ENCODE measurements at regions of chr2 and their contacts with region 1.

Region 1: DNA sequence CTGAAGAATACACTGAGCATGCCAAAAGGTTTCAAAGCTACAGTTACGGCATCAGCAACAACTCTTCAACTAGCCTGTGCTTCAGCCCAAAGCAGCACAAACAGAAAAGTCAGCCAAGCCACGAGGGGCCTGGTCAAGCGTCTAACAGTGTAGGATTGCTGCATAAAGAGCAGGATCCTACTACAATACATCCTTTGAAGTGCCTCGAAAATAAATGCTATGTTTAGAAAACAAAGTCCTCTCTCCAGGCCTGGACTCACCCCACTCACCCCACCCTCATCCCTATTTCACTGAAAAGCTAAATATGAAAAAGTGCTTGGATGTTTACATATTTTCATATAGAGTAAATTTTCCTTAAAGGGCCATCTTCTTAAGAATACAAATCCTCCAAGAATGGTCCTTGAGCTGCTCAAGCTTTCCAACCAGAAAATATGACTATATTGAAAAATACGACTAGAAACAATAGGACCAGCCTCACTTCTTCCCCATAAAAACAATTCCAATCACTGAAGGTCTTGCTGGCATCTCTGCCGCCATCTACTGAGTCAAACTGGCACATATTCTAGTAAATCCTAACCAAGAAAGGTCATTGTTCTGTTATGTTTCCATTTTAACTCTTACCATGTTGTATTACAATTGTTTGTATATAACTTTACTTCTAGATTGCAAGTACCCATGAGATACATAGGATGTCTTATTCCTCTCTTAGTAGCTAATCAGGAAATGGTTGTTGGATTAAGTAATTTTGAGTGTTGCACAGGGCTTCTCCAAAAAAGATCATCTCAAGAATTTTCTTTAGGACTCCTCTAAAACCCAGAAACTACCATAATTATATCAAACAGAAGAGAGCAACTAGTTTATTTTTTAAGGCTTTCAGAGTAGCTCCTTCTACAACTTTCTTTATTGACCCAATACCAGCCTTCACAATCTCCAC is 63.6 kb downstream of the CLHC1 start:
- DNase-seq: no peak
- ATAC-seq: peak; percentile 45
- H3K4me3 Mint-ChIP-seq: no peak overlapping the region
- H3K27ac Mint-ChIP-seq: no peak overlapping the region
- H3K4me1 Mint-ChIP-seq: no peaks in the 10 kb centered on the region
- H3K27me3 Mint-ChIP-seq: no peaks in the 10 kb centered on the region
- CTCF ChIP-seq: no peak

Region 2: GRCh38 chr2:54838585-54839035 is 329.9 kb before region 1 on chr2:
- CTCF ChIA-PET with region 1: interaction called, 7 read pairs
- POLR2A ChIA-PET with region 1: no interaction called
- intact Hi-C with region 1: loop called (anchors 1 kb)
- DNase-seq: peak; percentile 27
- ATAC-seq: peak; percentile 91
- H3K4me3 Mint-ChIP-seq: no peak overlapping the region
- H3K27ac Mint-ChIP-seq: no peak overlapping the region
- H3K4me1 Mint-ChIP-seq: peaks cover 4% of the 10 kb centered on the region
- H3K27me3 Mint-ChIP-seq: no peaks in the 10 kb centered on the region
- CTCF ChIP-seq: peak; percentile 58

Region 3: DNA sequence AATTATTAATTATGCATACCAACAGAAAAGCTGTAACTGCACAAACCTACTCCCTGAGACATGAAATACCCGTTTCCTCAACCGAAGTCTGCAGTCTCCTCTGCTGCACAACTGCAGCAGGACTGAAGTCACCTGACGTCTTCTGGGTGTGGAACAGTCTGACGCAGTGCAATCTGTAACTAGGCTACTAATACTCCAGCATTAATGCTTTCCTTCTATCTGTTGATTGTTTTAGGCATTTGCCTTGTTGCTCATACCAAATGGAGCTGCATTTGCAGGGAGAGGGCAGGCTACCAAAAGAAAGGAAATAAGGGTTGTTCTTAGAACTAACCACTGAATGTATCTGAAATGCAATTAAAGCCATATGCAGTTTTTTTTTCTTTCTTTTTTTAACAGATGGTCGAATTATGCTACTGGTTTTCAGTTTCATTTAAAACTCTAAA is 158.3 kb before region 1 on chr2:
- CTCF ChIA-PET with region 1: interaction called, 96 read pairs
- POLR2A ChIA-PET with region 1: no interaction called
- intact Hi-C with region 1: loop called (anchors 1 kb)
- DNase-seq: no peak
- ATAC-seq: peak; percentile 96
- H3K4me3 Mint-ChIP-seq: peak overlapping the region; percentile 84
- H3K27ac Mint-ChIP-seq: peak overlapping the region; percentile 67
- H3K4me1 Mint-ChIP-seq: peaks cover 63% of the 10 kb centered on the region
- H3K27me3 Mint-ChIP-seq: no peaks in the 10 kb centered on the region
- CTCF ChIP-seq: no peak

Region 4: DNA sequence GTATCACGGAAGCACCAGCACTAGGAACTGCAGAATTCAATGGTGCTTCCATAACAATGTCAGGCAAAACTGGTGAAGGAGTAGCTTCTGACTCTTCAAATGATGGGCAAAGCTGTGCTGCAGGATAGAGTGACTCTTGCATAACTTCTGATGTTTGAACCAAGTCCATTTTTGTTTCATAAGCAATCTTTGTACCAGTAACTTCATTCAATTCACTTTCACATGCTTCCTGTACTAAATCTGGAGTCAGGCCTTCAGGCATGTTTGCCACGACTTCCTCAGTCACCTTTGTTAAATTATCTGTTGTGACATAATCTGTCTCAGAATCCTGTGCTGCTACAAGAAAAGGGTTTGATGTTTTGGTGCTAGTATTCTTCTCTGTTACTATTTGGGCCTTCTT is 142.3 kb before region 1 on chr2:
- CTCF ChIA-PET with region 1: interaction called, 11 read pairs
- POLR2A ChIA-PET with region 1: no interaction called
- intact Hi-C with region 1: no loop called
- DNase-seq: no peak
- ATAC-seq: no peak
- H3K4me3 Mint-ChIP-seq: no peak overlapping the region
- H3K27ac Mint-ChIP-seq: peak overlapping the region; percentile 33
- H3K4me1 Mint-ChIP-seq: peaks cover 10% of the 10 kb centered on the region
- H3K27me3 Mint-ChIP-seq: no peaks in the 10 kb centered on the region
- CTCF ChIP-seq: no peak

Region 5: GRCh38 chr2:55150834-55151233 is 17.7 kb before region 1 on chr2:
- CTCF ChIA-PET with region 1: interaction called, 16 read pairs
- POLR2A ChIA-PET with region 1: no interaction called
- intact Hi-C with region 1: no loop called
- DNase-seq: no peak
- ATAC-seq: peak; percentile 89
- H3K4me3 Mint-ChIP-seq: no peak overlapping the region
- H3K27ac Mint-ChIP-seq: peak overlapping the region; percentile 84
- H3K4me1 Mint-ChIP-seq: peaks cover 54% of the 10 kb centered on the region
- H3K27me3 Mint-ChIP-seq: no peaks in the 10 kb centered on the region
- CTCF ChIP-seq: no peak